ENCODE measurements at regions of chr11 and their contacts with region 1.

Region 1: GRCh38 chr11:14454861-14455632 is 44.6 kb downstream of the COPB1 start:
- H3K4me3 ChIP-seq: no peak overlapping the region
- H3K27ac ChIP-seq: no peak overlapping the region
- H3K4me1 ChIP-seq: no peaks in the 10 kb centered on the region
- CTCF ChIP-seq: 0 out of 2 replicates have a peak, but pooled peaks have one; percentile 14

Region 2: GRCh38 chr11:14148653-14149273 is 306.3 kb before region 1 on chr11:
- CTCF ChIA-PET with region 1: no interaction called
- POLR2A ChIA-PET with region 1: no interaction called
- H3K4me3 ChIP-seq: no peak overlapping the region
- H3K27ac ChIP-seq: no peak overlapping the region
- H3K4me1 ChIP-seq: no peaks in the 10 kb centered on the region
- CTCF ChIP-seq: no peak

Region 3: GRCh38 chr11:14300661-14301304 is 154.3 kb before region 1 on chr11:
- CTCF ChIA-PET with region 1: interaction called, 110 read pairs
- POLR2A ChIA-PET with region 1: interaction called, 3 read pairs
- H3K4me3 ChIP-seq: no peak overlapping the region
- H3K27ac ChIP-seq: no peak overlapping the region
- H3K4me1 ChIP-seq: no peaks in the 10 kb centered on the region
- CTCF ChIP-seq: peak; percentile 49; the same call in 1 of the 2 replicates

Region 4: GRCh38 chr11:14308114-14308896 is 146.7 kb before region 1 on chr11:
- CTCF ChIA-PET with region 1: interaction called, 110 read pairs
- POLR2A ChIA-PET with region 1: no interaction called
- H3K4me3 ChIP-seq: no peak overlapping the region
- H3K27ac ChIP-seq: no peak overlapping the region
- H3K4me1 ChIP-seq: no peaks in the 10 kb centered on the region
- CTCF ChIP-seq: no peak

Region 5: GRCh38 chr11:14373931-14374646 is 81.0 kb before region 1 on chr11:
- CTCF ChIA-PET with region 1: no interaction called
- POLR2A ChIA-PET with region 1: no interaction called
- H3K4me3 ChIP-seq: no peak overlapping the region
- H3K27ac ChIP-seq: no peak overlapping the region
- H3K4me1 ChIP-seq: no peaks in the 10 kb centered on the region
- CTCF ChIP-seq: no peak

Region 6: GRCh38 chr11:14413307-14414069 is 41.6 kb before region 1 on chr11:
- CTCF ChIA-PET with region 1: interaction called, 38 read pairs
- POLR2A ChIA-PET with region 1: interaction called, 5 read pairs
- H3K4me3 ChIP-seq: no peak overlapping the region
- H3K27ac ChIP-seq: no peak overlapping the region
- H3K4me1 ChIP-seq: no peaks in the 10 kb centered on the region
- CTCF ChIP-seq: no peak

Region 7: GRCh38 chr11:14443638-14444037 is 11.4 kb before region 1 on chr11:
- CTCF ChIA-PET with region 1: interaction called, 15 read pairs
- POLR2A ChIA-PET with region 1: interaction called, 6 read pairs
- H3K4me3 ChIP-seq: no peak overlapping the region
- H3K27ac ChIP-seq: no peak overlapping the region
- H3K4me1 ChIP-seq: no peaks in the 10 kb centered on the region
- CTCF ChIP-seq: no peak

Measured in HEK293 (cell line).